A549 (cell line): ENCODE measurements at regions of chr17 and their contacts with region 1.

Region 1: DNA sequence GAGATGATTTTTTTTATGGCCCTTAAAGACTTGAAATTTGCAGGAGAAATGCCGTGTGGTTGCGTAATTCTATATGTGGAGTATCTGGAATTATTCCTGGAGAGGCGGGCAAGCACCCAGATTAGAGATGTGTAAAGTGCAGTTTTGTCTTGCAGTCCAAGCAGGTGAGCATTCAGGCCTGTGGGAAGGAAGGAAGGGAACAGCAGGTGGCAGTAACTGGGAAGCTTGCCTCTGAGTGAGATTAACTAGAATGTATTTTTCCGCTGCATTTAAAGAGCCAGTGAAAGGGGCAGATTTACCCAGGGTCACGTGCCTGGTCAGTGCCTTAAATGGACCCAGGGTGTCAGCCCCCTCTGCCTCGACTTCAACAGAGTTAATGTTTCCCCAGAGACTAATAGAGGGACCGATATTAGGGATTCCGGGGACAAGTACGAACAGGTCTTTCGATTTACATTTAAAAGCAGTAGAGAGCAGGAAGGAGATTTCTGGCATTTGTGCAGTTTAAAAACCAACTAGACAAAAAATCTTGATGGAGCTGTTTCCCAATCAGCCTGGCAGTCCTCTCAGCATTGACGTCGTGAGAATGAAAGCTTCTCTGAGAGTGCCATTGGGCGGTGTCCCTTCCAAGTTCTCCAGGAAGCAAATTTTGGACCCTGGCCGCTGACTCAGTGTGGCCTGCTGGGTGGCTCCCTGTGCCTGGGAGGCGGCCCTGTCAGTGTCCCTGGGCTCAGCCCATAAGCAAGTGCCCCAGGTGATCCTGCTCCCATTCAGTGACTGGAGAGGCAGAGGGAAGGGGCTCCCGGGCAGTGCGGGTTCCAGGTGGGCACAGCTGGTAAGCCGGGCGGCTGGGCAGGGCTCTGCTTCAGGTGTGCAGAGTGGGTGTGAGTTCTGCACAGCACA is 38.2 kb downstream of the KSR1 start:
- DNase-seq: peak; percentile 71 to 83
- ATAC-seq: peak; percentile 80 to 83
- H3K4me3 ChIP-seq: peak overlapping the region; percentile 24
- H3K27ac ChIP-seq: peak overlapping the region; percentile 84 to 89
- H3K4me1 ChIP-seq: peaks cover 65% of the 10 kb centered on the region
- CTCF ChIP-seq: peak; percentile 82
- EP300 ChIP-seq: no peak
- POLR2A ChIP-seq: no peak
- RAD21 ChIP-seq: peak; percentile 83 to 88

Region 2: DNA sequence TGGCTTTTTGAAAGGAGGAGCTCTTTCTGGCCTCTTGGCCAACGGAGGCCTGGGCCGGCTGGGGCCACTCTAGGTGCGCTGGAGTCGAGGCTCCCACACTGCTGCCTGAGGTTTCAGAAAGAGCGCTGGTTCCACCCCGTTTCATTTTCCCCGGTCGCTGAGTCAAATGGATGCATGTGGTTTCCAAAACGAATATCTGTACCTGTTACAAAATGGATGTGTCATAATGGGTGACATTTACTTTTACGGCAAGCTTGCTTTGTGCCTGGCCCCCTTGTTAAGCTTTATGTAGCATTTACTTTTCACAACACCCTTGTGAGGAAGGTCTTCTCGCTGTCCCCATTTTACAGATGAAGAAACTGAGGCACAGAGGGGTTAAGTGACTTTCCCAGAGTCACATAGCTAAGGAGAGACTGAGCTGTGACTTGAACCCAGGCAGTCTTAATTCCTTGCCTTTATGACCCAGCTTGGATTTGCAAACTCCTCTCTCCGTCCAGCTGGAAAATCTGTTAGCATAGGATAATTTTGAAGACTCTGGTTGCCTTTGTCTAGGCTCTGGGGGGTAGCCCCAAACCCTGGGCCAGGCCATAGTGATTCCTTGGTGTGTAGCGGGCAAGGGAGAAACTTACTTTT is 27.6 kb before region 1 on chr17:
- CTCF ChIA-PET with region 1: interaction called, 19 read pairs
- POLR2A ChIA-PET with region 1: no interaction called
- DNase-seq: no peak
- ATAC-seq: no peak
- H3K4me3 ChIP-seq: no peak overlapping the region
- H3K27ac ChIP-seq: no peak overlapping the region
- H3K4me1 ChIP-seq: peaks cover 44% of the 10 kb centered on the region
- CTCF ChIP-seq: no peak
- EP300 ChIP-seq: no peak
- POLR2A ChIP-seq: no peak
- RAD21 ChIP-seq: no peak

Region 3: DNA sequence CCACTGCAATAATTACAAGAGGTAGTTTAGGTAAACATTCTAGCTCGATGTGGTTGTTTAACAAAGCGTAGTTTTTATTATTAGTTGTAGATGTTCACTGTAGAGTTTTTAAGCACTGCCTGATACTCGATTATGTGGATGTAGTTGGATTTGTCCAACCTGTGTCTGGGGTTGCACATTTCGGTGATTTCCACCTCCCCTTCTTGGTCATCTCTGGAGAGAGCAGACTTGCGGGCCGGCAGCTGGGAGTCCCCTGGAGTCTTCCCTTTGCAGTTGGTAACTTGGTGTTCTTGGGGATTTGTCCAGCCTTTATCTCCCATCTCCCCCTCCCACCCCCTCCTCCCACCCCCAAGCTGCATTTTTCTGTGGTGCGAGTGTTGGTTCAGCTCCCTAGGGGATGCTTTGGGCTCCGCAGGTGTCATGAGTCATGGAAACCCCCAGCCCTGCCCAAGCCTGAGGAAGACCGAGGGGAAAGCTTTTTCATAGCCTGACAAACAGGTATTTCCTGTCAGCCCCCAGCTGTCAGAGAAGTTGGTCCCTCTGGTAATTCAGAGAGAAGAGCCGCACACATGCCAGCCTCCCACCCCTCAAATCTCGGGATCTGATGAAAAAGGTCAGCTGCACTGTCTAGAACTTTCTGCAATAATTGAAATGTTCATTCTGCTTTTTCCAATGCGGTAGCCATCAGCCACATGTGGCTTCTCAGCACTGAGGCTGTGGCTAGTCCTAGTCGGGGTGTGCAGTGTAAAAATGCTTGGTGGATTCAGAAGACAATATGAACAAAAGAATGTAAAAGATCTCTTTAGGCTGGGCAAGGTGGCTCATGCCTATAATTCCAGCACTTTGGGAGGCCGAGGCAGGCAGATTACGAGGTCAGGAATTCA is 12.1 kb after region 1 on chr17:
- CTCF ChIA-PET with region 1: interaction called, 14 read pairs
- POLR2A ChIA-PET with region 1: no interaction called
- DNase-seq: no peak
- ATAC-seq: no peak
- H3K4me3 ChIP-seq: no peak overlapping the region
- H3K27ac ChIP-seq: peak overlapping the region in 1 of 2 experiments; percentile 13; a peak in 1 of 6 replicates
- H3K4me1 ChIP-seq: peaks cover 7% of the 10 kb centered on the region; the same call in 2 of the 3 replicates
- CTCF ChIP-seq: no peak
- EP300 ChIP-seq: no peak
- POLR2A ChIP-seq: no peak
- RAD21 ChIP-seq: no peak

Region 4: GRCh38 chr17:27526604-27527230 is 32.3 kb after region 1 on chr17:
- CTCF ChIA-PET with region 1: interaction called, 30 read pairs
- POLR2A ChIA-PET with region 1: no interaction called
- DNase-seq: peak in 1 of 2 experiments; percentile 52
- ATAC-seq: peak in 1 of 2 experiments; percentile 46; a peak in 3 of 6 replicates
- H3K4me3 ChIP-seq: no peak overlapping the region
- H3K27ac ChIP-seq: peak overlapping the region; percentile 50 to 79
- H3K4me1 ChIP-seq: peaks cover 67% of the 10 kb centered on the region
- CTCF ChIP-seq: no peak
- EP300 ChIP-seq: no peak
- POLR2A ChIP-seq: no peak
- RAD21 ChIP-seq: no peak

Region 5: GRCh38 chr17:27552469-27552779 is 58.0 kb after region 1 on chr17:
- CTCF ChIA-PET with region 1: interaction called, 61 read pairs
- POLR2A ChIA-PET with region 1: no interaction called
- DNase-seq: peak; percentile 91 to 95
- ATAC-seq: peak; percentile 85 to 88
- H3K4me3 ChIP-seq: 0 out of 3 replicates have a peak overlapping the region, but pooled peaks have one; percentile 10
- H3K27ac ChIP-seq: peak overlapping the region; percentile 91 to 97
- H3K4me1 ChIP-seq: peaks cover 68% of the 10 kb centered on the region
- CTCF ChIP-seq: no peak
- EP300 ChIP-seq: peak; percentile 3 to 35; a peak in 1 of 5 replicates
- POLR2A ChIP-seq: no peak
- RAD21 ChIP-seq: peak in 1 of 2 experiments; percentile 43; a peak in 2 of 5 replicates

Region 6: DNA sequence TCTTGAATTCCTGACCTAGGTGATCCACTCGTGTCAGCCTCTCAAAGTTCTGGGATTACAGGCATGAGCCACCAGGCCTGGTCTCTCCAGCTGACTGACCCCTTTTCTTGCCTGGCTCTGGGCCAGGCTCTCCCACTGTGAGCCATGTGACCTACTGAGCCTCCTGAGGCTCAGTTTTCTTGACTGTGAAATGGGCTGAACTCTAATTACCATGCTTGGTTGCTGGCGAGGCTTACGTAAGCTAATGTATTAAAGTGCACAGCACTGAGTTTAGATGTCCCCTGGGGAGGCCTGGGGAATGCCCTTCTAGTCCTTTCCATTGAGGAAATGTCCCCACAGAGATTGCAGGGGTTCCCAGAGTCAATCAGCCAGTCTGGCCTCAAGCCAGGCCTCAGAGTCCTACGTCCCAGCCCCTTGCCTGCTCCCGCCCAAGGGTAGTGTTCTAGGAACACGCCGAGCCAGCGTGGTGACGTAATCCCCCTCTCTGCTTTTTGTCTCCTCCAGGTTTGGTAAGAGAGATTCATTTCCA is 90.8 kb after region 1 on chr17:
- CTCF ChIA-PET with region 1: interaction called, 575 read pairs
- POLR2A ChIA-PET with region 1: no interaction called
- DNase-seq: no peak
- ATAC-seq: no peak
- H3K4me3 ChIP-seq: no peak overlapping the region
- H3K27ac ChIP-seq: peak overlapping the region; percentile 37 to 74; a peak in 5 of 6 replicates
- H3K4me1 ChIP-seq: peaks cover 27% of the 10 kb centered on the region
- CTCF ChIP-seq: no peak
- EP300 ChIP-seq: no peak
- POLR2A ChIP-seq: no peak
- RAD21 ChIP-seq: no peak

Region 7: GRCh38 chr17:27622986-27623385 is 128.5 kb after region 1 on chr17:
- CTCF ChIA-PET with region 1: no interaction called
- POLR2A ChIA-PET with region 1: no interaction called
- DNase-seq: no peak
- ATAC-seq: no peak
- H3K4me3 ChIP-seq: no peak overlapping the region
- H3K27ac ChIP-seq: no peak overlapping the region
- H3K4me1 ChIP-seq: no peaks in the 10 kb centered on the region
- CTCF ChIP-seq: no peak
- EP300 ChIP-seq: no peak
- POLR2A ChIP-seq: no peak
- RAD21 ChIP-seq: no peak